ENCODE measurements at regions of chr17 and their contacts with region 1.

Region 1: GRCh38 chr17:19755821-19756510 is 7.9 kb upstream of the ALDH3A1 start:
- DNase-seq: no peak
- H3K4me3 ChIP-seq: no peak overlapping the region
- H3K27ac ChIP-seq: no peak overlapping the region
- H3K4me1 ChIP-seq: peaks cover 7 to 15% (median 14%) of the 10 kb centered on the region in 4 donors
- H3K27me3 ChIP-seq: no peaks in the 10 kb centered on the region
- CTCF ChIP-seq: no peak
- EP300 ChIP-seq: no peak
- POLR2A ChIP-seq: no peak

Region 2: GRCh38 chr17:19569785-19570543 is 186.0 kb before region 1 on chr17:
- in situ Hi-C with region 1: no loop called
- intact Hi-C with region 1: no loop called
- DNase-seq: peak; percentile 52
- H3K4me3 ChIP-seq: no peak overlapping the region
- H3K27ac ChIP-seq: peak overlapping the region; percentile 73 to 80 (median 78)
- H3K4me1 ChIP-seq: peaks cover 8 to 33% (median 12%) of the 10 kb centered on the region in 4 donors
- H3K27me3 ChIP-seq: no peaks in the 10 kb centered on the region
- CTCF ChIP-seq: no peak
- EP300 ChIP-seq: no peak
- POLR2A ChIP-seq: no peak

Region 3: DNA sequence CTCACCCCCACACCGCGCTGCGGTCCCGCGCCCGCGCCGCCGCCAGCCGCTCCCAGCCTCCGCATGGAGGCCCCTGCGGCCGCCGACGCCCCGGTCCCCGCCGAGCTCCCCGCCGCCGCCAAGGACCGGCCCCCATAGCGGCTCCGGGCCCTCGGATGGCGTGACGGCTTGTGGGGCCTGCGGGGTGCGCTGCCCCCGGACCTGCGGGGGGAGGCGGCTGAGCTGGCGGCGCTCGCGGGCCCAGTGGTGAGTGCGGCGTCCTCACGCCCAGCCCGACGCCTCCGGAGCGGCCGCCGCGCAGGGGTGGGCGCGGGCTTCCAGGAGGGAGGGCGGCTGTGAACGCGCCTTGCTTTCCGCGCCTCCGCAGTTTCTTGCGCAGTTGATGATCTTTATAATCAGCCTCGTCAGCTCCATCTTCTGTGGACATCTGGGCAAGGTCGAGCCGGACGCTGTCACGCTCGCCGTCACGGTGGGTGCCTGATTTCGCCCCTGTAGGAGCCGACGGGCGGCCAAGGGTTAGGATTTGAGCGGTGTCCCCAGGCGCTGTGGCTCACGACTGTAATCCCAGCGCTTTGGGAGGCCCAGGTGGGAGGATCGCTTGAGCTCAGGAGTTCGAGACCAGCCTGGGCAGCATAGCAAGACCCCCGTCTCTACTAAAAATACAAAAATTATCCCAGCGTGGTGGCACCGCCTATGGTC is 175.9 kb before region 1 on chr17:
- in situ Hi-C with region 1: no loop called
- intact Hi-C with region 1: loop called (anchors 1 kb)
- DNase-seq: no peak
- H3K4me3 ChIP-seq: peak overlapping the region; percentile 29 to 50 (median 42)
- H3K27ac ChIP-seq: peak overlapping the region in 1 of 4 donors; percentile 2
- H3K4me1 ChIP-seq: peaks cover 0 to 10% (median 3%) of the 10 kb centered on the region in 4 donors
- H3K27me3 ChIP-seq: peaks cover 32% of the 10 kb centered on the region
- CTCF ChIP-seq: no peak
- EP300 ChIP-seq: no peak
- POLR2A ChIP-seq: no peak

Region 4: GRCh38 chr17:19664136-19664820 is 91.7 kb before region 1 on chr17:
- in situ Hi-C with region 1: loop called in 2 of 4 experiments (anchors 25 kb)
- intact Hi-C with region 1: loop called (anchors 5 kb)
- DNase-seq: no peak
- H3K4me3 ChIP-seq: no peak overlapping the region
- H3K27ac ChIP-seq: no peak overlapping the region
- H3K4me1 ChIP-seq: peaks cover 0 to 6% (median 1%) of the 10 kb centered on the region in 4 donors
- H3K27me3 ChIP-seq: no peaks in the 10 kb centered on the region
- CTCF ChIP-seq: no peak
- EP300 ChIP-seq: no peak
- POLR2A ChIP-seq: no peak

Measured in transverse colon (tissue), 4 donors.